ENCODE measurements at regions of chr10 and their contacts with region 1.

Region 1: DNA sequence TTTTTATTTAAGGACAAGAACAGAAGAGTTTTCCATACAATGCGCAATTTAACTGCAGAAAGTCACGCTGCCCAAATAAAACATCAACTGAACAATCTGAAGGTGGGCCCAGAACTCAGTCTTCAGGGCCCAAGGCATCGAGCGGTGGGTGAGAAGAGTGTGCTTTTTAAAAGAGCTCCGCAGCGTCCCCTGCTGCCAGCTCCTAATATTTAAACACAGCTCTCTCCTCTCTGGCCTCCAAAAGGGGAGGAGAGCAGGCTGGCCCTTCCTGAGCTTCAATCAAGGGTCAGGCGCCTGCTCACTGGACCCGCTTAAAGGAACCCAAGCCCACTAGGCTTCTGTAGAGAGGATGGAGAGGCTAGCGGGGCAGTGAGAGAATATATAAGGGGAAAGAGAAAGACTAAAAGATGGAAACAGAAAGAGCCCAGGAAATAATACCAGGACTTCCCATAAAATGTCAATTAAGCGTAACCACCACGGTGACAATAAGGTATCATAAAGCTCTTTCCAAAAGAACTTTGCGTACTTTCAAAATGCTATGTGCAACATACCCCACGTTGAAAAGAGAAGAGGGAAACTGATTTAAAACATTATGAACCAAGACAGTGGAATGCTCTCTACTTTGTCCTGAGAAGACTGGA is 2.8 kb downstream of the FAM53B start:
- DNase-seq: peak; percentile 95
- H3K4me3 ChIP-seq: peak overlapping the region; percentile 65
- H3K27ac ChIP-seq: peak overlapping the region; percentile 71
- H3K4me1 ChIP-seq: peaks cover 44% of the 10 kb centered on the region
- H3K27me3 ChIP-seq: no peaks in the 10 kb centered on the region
- CTCF ChIP-seq: peak; percentile 82

Region 2: GRCh38 chr10:124530215-124530665 is 211.2 kb before region 1 on chr10:
- intact Hi-C with region 1: loop called (anchors 2 kb)
- DNase-seq: peak; percentile 90
- H3K4me3 ChIP-seq: no peak overlapping the region
- H3K27ac ChIP-seq: no peak overlapping the region
- H3K4me1 ChIP-seq: no peaks in the 10 kb centered on the region
- H3K27me3 ChIP-seq: no peaks in the 10 kb centered on the region
- CTCF ChIP-seq: peak; percentile 79

Region 3: DNA sequence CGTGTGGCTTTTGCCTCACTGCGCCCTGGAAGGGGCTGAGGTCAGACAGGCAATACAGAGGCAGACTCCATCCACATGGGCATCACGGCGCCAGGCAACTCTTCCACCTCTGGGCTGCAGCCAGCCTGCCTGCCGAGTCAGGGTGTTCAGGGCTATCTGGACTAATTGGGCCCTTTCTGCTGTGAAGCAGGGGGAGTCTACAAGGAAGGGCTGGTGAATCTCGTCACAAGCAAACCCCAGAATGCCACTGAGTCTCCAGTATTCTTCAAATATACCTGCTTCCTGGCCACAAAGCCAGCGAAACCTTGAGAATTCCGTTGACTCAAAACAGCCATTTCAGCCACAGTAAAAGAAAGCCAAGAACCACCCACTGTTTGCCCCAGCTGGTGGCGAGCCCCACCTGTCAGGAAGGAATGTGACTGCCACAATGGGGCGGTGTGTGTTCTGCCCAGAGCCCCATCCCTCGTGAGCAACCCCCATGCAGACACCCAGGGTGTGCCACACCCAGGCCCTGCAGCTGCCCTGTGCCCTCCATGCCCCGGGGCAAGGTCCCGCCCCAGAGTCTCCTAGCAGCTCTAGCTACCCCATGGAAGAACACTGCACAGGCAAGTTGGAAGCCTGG is 114.5 kb before region 1 on chr10:
- intact Hi-C with region 1: loop called (anchors 5 kb)
- DNase-seq: peak; percentile 85
- H3K4me3 ChIP-seq: no peak overlapping the region
- H3K27ac ChIP-seq: peak overlapping the region; percentile 25
- H3K4me1 ChIP-seq: peaks cover 20% of the 10 kb centered on the region
- H3K27me3 ChIP-seq: no peaks in the 10 kb centered on the region
- CTCF ChIP-seq: no peak

Region 4: DNA sequence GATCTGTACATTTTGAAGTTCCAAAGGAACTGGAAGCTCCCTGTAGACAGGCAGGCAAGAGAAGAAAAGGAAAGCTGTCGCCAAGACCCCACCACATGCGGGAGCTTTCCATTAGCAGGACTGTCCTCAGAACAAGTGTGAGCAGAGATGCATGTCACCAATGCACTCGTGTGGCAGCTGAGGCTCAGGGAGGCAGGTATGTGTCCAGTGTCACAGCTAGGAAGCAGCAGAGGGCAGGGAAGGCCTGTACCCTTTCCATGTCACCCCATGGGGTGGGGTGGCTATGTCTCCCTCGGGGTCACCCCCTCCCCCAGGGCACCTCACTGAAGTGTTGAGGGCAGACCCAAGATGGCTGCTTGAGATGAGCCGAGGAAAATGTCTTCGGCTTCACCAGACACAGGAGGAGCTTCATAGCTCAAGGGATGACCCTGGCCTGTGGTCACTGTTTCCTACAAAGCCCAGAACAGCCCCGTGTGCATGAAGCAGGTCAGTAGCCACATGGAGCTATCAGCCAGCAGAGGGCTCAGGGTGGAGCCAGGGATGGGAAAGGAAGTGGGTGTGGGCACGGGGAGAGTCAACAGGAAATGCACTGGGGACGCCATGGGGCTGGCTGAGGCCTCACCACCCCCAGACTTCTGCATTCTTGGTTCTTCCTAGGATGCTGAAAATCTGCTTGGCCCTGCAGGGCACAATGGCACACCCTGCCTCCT is 93.8 kb before region 1 on chr10:
- intact Hi-C with region 1: loop called (anchors 5 kb)
- DNase-seq: peak; percentile 75
- H3K4me3 ChIP-seq: no peak overlapping the region
- H3K27ac ChIP-seq: peak overlapping the region; percentile 71
- H3K4me1 ChIP-seq: peaks cover 27% of the 10 kb centered on the region
- H3K27me3 ChIP-seq: no peaks in the 10 kb centered on the region
- CTCF ChIP-seq: peak; percentile 31